AG04449 (cell line): ENCODE measurements at regions of chr12 and their contacts with region 1.

Region 1: GRCh38 chr12:53098982-53099651 is 1.6 kb downstream of the IGFBP6 start:
- DNase-seq: peak; percentile 88
- H3K4me3 ChIP-seq: peak overlapping the region; percentile 73
- CTCF ChIP-seq: peak; percentile 92

Region 2: DNA sequence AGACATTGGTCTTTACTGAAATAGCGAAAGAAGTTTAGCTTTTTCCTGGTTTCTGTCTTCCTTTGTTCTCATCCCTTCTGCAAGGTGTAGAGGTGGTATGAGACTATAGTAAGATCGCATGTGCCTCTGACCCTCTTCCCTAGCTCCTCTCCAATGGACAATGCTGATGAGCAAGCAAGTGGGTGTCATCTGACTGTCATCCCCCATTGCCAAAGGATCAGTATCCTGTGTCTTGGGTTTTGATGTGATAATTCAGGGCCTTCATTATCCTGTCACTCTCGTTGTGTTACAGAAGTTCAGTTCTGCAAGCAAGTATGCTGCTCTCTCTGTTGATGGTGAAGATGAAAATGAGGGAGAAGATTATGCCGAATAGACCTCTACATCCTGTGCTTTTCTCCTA is 59.3 kb before region 1 on chr12:
- CTCF ChIA-PET with region 1: interaction called, 14 read pairs
- POLR2A ChIA-PET with region 1: interaction called, 3 read pairs
- DNase-seq: no peak
- H3K4me3 ChIP-seq: no peak overlapping the region
- CTCF ChIP-seq: no peak

Region 3: GRCh38 chr12:53054112-53054833 is 44.8 kb before region 1 on chr12:
- CTCF ChIA-PET with region 1: interaction called, 24 read pairs
- POLR2A ChIA-PET with region 1: interaction called, 24 read pairs
- DNase-seq: no peak
- H3K4me3 ChIP-seq: peak overlapping the region; percentile 49
- CTCF ChIP-seq: no peak

Region 4: DNA sequence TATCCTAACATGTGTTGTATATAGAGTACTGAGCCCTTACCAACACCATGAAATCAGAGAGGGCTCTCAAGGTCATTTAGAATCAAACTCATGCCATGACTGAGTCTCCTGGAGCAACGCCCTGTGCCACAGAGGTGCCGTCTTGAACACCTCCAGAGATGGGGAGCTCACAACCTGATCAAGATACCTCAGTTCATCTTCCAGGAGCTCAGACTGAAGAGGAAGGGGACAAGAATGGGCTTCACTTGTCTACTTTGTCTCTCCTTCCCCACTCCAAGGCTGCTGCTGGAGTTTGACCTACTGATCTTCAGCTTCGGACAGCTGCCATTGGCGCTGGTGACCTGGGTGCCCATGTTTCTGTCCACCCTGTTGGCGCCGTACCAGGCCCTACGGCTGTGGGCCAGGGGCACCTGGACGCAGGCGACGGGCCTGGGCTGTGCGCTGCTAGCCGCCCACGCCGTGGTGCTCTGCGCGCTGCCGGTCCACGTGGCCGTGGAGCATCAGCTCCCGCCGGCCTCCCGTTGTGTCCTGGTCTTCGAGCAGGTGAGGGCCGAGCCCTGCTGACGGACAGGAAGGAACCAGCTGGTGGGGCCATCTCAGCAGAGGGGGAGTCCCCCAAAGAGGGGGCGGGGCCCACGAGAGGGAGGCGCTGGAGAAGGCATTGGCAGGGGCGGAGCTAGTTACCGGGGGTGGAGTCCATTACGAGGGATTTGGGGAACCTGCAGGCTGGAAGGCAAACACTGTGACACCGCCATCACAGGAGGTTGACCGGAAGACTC is 16.2 kb after region 1 on chr12:
- CTCF ChIA-PET with region 1: interaction called, 25 read pairs
- POLR2A ChIA-PET with region 1: no interaction called
- DNase-seq: no peak
- H3K4me3 ChIP-seq: no peak overlapping the region
- CTCF ChIP-seq: no peak

Region 5: DNA sequence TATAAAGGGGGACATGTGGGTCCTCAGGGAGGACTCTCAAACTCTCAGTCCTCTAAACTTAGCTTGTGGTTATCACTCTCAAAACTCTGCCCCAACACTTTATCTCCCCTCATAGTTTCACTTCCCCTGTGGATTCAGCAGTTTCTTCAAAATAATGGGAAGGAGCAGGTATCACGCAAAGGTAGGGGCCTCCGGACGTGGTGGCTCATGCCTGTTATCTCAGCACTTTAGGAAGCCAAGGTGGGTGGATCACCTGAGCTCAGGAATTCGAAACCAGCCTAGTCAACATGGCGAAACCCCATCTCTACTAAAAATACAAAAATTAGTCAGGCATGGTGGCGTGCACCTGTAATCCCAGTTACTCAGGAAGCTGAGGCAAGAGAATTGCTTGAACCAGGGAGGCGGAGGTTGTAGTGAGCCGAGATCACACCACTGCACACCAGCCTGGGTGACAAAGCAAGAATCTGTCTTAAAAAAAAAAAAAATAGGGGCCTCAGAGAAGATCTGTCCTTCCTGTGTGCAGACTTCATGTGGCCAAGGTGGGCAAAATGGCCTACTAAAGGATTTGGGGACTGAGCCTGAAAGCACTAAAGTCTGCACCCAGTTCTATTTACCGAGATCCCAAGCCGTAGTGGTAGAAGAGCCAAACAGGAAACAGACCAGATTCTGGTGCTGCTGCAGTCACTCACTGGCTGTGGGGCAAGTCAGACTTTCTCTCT is 101.5 kb after region 1 on chr12:
- CTCF ChIA-PET with region 1: interaction called, 13 read pairs
- POLR2A ChIA-PET with region 1: interaction called, 5 read pairs
- DNase-seq: no peak
- H3K4me3 ChIP-seq: no peak overlapping the region
- CTCF ChIP-seq: no peak